Endothelial cell of umbilical vein (primary cell): ENCODE measurements at regions of chr7 and their contacts with region 1.

Region 1: DNA sequence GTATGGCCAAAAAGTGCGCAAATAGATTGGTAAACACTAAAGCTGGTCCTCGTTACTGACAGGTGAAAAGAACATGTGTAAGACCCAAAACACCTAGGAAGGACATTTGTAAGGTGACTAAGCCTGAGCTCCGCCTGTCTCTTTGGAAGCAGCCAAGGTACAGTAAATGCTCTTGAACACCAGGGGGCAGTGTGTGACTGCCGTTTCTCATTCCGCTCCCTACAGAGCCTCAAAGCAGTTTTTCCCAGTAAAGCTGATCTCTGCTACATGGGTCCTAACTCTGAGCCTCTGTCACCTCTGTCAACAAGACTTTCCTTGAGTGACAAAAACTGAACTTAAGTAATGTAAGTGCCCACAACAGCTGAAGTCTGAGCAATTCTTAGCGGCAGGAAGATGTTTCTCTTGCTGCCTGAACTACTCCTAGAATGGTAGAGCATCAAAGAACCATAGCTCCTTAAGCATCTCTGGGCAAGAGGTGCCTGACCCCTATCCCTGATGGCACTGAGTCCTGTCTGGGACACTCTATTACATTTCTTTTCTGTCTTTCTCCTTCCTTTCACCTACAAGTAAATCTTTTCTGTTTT is 238.0 kb upstream of the INHBA start:
- DNase-seq: peak; percentile 72
- H3K4me3 ChIP-seq: no peak overlapping the region
- H3K27ac ChIP-seq: no peak overlapping the region
- H3K4me1 ChIP-seq: no peaks in the 10 kb centered on the region
- H3K27me3 ChIP-seq: peaks cover under 1 to 3% of the 10 kb centered on the region in 2 experiments
- CTCF ChIP-seq: peak; percentile 86 to 87
- POLR2A ChIP-seq: no peak

Region 2: GRCh38 chr7:40232242-40232893 is 1708.5 kb before region 1 on chr7:
- CTCF ChIA-PET with region 1: interaction called, 11 read pairs
- POLR2A ChIA-PET with region 1: no interaction called
- dilution Hi-C with region 1: no loop called
- intact Hi-C with region 1: no loop called
- DNase-seq: peak; percentile 79
- H3K4me3 ChIP-seq: no peak overlapping the region
- H3K27ac ChIP-seq: no peak overlapping the region
- H3K4me1 ChIP-seq: no peaks in the 10 kb centered on the region
- H3K27me3 ChIP-seq: no peaks in the 10 kb centered on the region
- CTCF ChIP-seq: peak; percentile 42 to 43
- POLR2A ChIP-seq: no peak

Region 3: DNA sequence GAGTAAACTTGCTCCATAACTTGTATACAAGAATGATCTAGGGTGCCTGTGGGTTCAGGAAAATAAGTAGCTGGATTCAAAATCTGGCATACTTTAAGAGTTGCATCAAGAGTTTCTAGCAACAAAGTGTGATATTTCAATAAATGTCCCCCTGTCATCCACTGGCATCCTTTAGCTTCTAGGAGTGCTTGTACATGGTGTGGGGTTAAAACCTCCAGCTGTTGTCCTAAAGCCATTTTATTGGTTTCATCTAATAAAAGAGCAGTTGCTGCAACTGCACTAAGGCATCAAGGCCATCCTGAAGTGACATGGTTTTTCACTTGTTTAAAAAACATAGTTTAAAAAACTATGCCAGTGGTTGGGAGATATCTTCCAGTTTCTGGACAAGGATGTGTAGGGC is 386.4 kb before region 1 on chr7:
- CTCF ChIA-PET with region 1: no interaction called
- POLR2A ChIA-PET with region 1: no interaction called
- dilution Hi-C with region 1: no loop called
- intact Hi-C with region 1: no loop called
- DNase-seq: no peak
- H3K4me3 ChIP-seq: no peak overlapping the region
- H3K27ac ChIP-seq: no peak overlapping the region
- H3K4me1 ChIP-seq: no peaks in the 10 kb centered on the region
- H3K27me3 ChIP-seq: no peaks in the 10 kb centered on the region
- CTCF ChIP-seq: no peak
- POLR2A ChIP-seq: no peak

Region 4: GRCh38 chr7:41930538-41931262 is 10.2 kb before region 1 on chr7:
- CTCF ChIA-PET with region 1: interaction called, 15 read pairs
- POLR2A ChIA-PET with region 1: no interaction called
- dilution Hi-C with region 1: no loop called
- intact Hi-C with region 1: no loop called
- DNase-seq: no peak
- H3K4me3 ChIP-seq: no peak overlapping the region
- H3K27ac ChIP-seq: no peak overlapping the region
- H3K4me1 ChIP-seq: no peaks in the 10 kb centered on the region
- H3K27me3 ChIP-seq: no peaks in the 10 kb centered on the region
- CTCF ChIP-seq: no peak
- POLR2A ChIP-seq: no peak

Region 5: DNA sequence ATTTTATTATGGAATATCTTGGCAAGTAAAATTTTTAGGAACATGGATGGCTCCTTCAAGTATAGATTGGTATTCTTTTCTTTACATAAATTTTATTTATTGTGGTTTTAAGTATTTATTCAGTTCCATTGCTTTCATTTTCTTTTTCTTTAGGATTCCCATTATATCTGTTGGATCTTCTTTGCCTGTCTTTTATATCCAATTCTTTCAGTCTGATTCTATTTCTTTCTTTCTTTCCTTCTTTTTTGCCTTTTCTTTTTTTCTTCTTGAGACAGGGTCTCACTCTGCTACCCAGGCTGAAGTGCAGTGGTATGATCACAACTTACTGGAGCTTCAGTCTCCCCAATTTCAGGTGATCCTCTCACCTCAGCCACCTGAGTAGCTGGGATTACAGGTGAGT is 370.3 kb after region 1 on chr7:
- CTCF ChIA-PET with region 1: interaction called, 5 read pairs
- POLR2A ChIA-PET with region 1: no interaction called
- dilution Hi-C with region 1: no loop called
- intact Hi-C with region 1: loop called (anchors 1 kb)
- DNase-seq: no peak
- H3K4me3 ChIP-seq: no peak overlapping the region
- H3K27ac ChIP-seq: no peak overlapping the region
- H3K4me1 ChIP-seq: peaks cover 2% of the 10 kb centered on the region
- H3K27me3 ChIP-seq: peaks cover 6 to 31% of the 10 kb centered on the region in 2 experiments
- CTCF ChIP-seq: no peak
- POLR2A ChIP-seq: no peak

Region 6: GRCh38 chr7:42831718-42832431 is 891.0 kb after region 1 on chr7:
- CTCF ChIA-PET with region 1: interaction called, 335 read pairs
- POLR2A ChIA-PET with region 1: no interaction called
- dilution Hi-C with region 1: no loop called
- intact Hi-C with region 1: loop called (anchors 1 kb)
- DNase-seq: peak; percentile 10
- H3K4me3 ChIP-seq: no peak overlapping the region
- H3K27ac ChIP-seq: no peak overlapping the region
- H3K4me1 ChIP-seq: no peaks in the 10 kb centered on the region
- H3K27me3 ChIP-seq: peaks cover 0 to 5% of the 10 kb centered on the region in 2 experiments
- CTCF ChIP-seq: peak; percentile 10 to 32
- POLR2A ChIP-seq: no peak

Region 7: DNA sequence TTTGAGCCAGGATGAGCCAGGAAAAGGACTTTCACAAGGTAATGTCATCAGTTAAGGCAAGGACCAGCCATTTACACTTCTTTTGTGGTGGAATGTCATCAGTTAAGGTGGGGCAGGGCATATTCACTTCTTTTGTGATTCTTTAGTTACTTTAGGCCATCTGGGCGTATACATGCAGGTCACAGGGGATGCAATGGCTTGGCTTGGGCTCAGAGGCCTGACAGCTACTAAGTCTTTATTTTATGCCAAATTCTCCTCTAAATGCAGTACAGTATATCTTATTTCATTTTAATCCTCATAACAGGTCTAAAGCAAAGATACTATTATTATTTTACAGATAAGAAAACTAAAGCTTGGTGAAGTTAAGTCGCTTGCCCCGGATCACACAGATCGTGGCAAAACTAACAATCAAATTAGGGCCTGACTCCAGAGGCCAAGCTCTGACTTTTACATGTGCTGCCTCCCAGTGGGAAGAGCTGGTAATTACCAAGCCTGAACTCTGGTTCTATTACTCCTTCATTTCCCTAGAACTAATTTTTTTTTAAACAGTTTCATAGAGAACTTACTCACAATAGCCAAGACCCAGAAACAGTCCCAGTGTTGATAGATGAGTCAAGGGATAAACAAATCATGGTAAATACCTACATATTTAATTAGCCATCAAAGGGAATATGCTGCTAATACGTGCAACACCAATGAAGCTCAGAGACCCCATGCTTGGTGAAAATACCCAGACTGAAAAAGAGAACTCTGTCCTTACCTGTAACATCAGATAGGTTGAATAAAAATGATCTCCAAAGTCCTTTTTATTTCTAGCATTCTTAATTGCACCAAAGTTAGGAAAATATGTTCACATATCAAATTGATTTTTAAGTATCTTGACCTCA is 935.6 kb after region 1 on chr7:
- CTCF ChIA-PET with region 1: interaction called, 354 read pairs
- POLR2A ChIA-PET with region 1: no interaction called
- dilution Hi-C with region 1: no loop called
- intact Hi-C with region 1: loop called (anchors 1 kb)
- DNase-seq: peak; percentile 67
- H3K4me3 ChIP-seq: no peak overlapping the region
- H3K27ac ChIP-seq: no peak overlapping the region
- H3K4me1 ChIP-seq: no peaks in the 10 kb centered on the region
- H3K27me3 ChIP-seq: peaks cover 3 to 6% of the 10 kb centered on the region in 2 experiments
- CTCF ChIP-seq: peak; percentile 60 to 68
- POLR2A ChIP-seq: no peak

Region 8: GRCh38 chr7:43260980-43261878 is 1320.4 kb after region 1 on chr7:
- CTCF ChIA-PET with region 1: interaction called, 5 read pairs
- POLR2A ChIA-PET with region 1: no interaction called
- dilution Hi-C with region 1: no loop called
- intact Hi-C with region 1: loop called (anchors 1 kb)
- DNase-seq: peak; percentile 70
- H3K4me3 ChIP-seq: no peak overlapping the region
- H3K27ac ChIP-seq: no peak overlapping the region
- H3K4me1 ChIP-seq: no peaks in the 10 kb centered on the region
- H3K27me3 ChIP-seq: peaks cover 3 to 7% of the 10 kb centered on the region in 2 experiments
- CTCF ChIP-seq: peak; percentile 90 to 91
- POLR2A ChIP-seq: no peak